Mammary epithelial cell (primary cell): ENCODE measurements at regions of chr21 and their contacts with region 1.

Region 1: DNA sequence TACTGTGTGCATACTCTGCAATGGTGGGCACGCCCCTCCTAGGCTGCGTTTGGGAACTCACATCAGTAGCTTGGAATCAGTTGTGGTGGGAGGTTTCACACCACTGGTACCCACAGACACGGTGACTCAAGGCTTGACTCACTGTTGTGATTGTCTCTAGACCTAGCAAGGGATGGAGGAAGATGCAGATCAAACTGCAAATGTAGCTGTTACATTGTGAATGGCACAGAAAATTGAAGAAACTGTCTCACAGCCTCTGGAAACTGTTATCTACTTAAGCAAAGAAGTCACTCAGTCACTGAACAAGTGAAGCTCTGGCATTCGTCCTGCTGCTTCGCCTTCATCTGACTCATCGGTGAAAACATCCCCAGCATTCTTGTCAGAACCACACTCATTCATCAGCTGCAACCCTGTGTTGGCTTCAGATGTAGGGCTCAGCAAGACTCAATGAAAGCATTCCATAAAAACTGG is 59.5 kb downstream of the POFUT2 start:
- DNase-seq: peak; percentile 89
- H3K4me3 ChIP-seq: no peak overlapping the region
- H3K27ac ChIP-seq: no peak overlapping the region
- H3K4me1 ChIP-seq: peaks cover 24% of the 10 kb centered on the region
- H3K27me3 ChIP-seq: peaks cover 11% of the 10 kb centered on the region
- CTCF ChIP-seq: no peak

Region 2: GRCh38 chr21:45130324-45130774 is 97.9 kb before region 1 on chr21:
- CTCF ChIA-PET with region 1: no interaction called
- dilution Hi-C with region 1: no loop called
- in situ Hi-C with region 1: no loop called
- intact Hi-C with region 1: no loop called
- DNase-seq: peak; percentile 61
- H3K4me3 ChIP-seq: no peak overlapping the region
- H3K27ac ChIP-seq: no peak overlapping the region
- H3K4me1 ChIP-seq: peaks cover 19% of the 10 kb centered on the region
- H3K27me3 ChIP-seq: no peaks in the 10 kb centered on the region
- CTCF ChIP-seq: no peak

Region 3: DNA sequence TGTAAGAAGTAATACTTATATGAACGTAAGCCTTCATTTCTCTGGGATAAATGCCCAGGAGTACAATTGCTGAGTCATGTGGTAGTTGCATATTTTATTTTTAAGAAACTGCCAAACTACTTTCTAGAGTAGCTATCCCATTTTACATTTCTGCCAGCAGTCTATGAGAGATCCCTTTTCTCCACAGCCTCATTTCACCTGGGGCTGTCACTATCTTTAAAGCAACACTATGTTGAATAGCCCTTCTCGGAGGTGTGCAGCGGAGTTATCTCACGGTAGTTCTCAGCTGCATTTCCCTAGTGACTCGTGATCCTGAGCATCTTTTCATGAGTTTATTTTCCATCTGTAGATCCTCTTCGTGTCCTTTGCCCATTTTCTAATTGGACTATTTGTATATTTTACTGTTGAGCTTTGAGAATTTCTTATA is 60.4 kb before region 1 on chr21:
- CTCF ChIA-PET with region 1: no interaction called
- dilution Hi-C with region 1: no loop called
- in situ Hi-C with region 1: no loop called
- intact Hi-C with region 1: loop called (anchors 10 kb)
- DNase-seq: no peak
- H3K4me3 ChIP-seq: no peak overlapping the region
- H3K27ac ChIP-seq: no peak overlapping the region
- H3K4me1 ChIP-seq: peaks cover 18% of the 10 kb centered on the region
- H3K27me3 ChIP-seq: no peaks in the 10 kb centered on the region
- CTCF ChIP-seq: no peak

Region 4: GRCh38 chr21:45262616-45263015 is 34.4 kb after region 1 on chr21:
- CTCF ChIA-PET with region 1: no interaction called
- dilution Hi-C with region 1: no loop called
- in situ Hi-C with region 1: no loop called
- intact Hi-C with region 1: no loop called
- DNase-seq: no peak
- H3K4me3 ChIP-seq: no peak overlapping the region
- H3K27ac ChIP-seq: no peak overlapping the region
- H3K4me1 ChIP-seq: no peaks in the 10 kb centered on the region
- H3K27me3 ChIP-seq: peaks cover 4% of the 10 kb centered on the region
- CTCF ChIP-seq: no peak

Region 5: GRCh38 chr21:45319461-45320211 is 91.4 kb after region 1 on chr21:
- CTCF ChIA-PET with region 1: no interaction called
- dilution Hi-C with region 1: no loop called
- in situ Hi-C with region 1: no loop called
- intact Hi-C with region 1: no loop called
- DNase-seq: no peak
- H3K4me3 ChIP-seq: no peak overlapping the region
- H3K27ac ChIP-seq: no peak overlapping the region
- H3K4me1 ChIP-seq: peaks cover 16% of the 10 kb centered on the region
- H3K27me3 ChIP-seq: no peaks in the 10 kb centered on the region
- CTCF ChIP-seq: no peak

Region 6: DNA sequence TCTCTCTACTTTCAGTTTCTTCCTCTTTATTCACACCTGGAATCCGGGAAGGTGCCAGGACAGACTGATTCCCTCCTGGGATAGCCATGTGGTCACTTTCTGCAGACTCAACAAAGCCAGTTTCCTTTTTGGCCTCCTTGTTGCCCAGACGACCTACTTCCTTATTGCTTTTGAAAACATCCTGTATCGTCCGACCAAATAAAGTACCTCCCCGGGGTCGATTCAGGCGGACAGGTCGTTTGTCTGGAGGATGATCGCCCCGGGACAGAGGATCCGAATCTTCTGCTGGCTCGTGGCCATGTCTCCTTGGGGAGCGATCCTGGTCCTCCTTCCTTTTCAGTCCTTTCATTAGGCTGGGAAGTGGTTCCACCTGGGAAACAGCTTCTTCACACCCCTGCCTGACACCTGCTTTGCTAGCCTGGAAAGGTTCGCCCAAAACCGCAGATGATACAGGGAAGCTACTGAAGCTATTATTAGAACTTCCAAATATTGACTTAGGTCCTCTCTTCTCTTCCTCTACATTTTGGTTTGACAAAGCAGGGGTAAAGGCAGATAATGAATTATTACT is 1056.0 kb after region 1 on chr21:
- CTCF ChIA-PET with region 1: no interaction called
- dilution Hi-C with region 1: no loop called
- in situ Hi-C with region 1: no loop called
- intact Hi-C with region 1: no loop called
- DNase-seq: no peak
- H3K4me3 ChIP-seq: peak overlapping the region in 2 of 3 experiments; percentile 15 to 90
- H3K27ac ChIP-seq: no peak overlapping the region
- H3K4me1 ChIP-seq: peaks cover 25% of the 10 kb centered on the region
- H3K27me3 ChIP-seq: no peaks in the 10 kb centered on the region
- CTCF ChIP-seq: no peak